ENCODE measurements at regions of chr16 and their contacts with region 1.

Region 1: DNA sequence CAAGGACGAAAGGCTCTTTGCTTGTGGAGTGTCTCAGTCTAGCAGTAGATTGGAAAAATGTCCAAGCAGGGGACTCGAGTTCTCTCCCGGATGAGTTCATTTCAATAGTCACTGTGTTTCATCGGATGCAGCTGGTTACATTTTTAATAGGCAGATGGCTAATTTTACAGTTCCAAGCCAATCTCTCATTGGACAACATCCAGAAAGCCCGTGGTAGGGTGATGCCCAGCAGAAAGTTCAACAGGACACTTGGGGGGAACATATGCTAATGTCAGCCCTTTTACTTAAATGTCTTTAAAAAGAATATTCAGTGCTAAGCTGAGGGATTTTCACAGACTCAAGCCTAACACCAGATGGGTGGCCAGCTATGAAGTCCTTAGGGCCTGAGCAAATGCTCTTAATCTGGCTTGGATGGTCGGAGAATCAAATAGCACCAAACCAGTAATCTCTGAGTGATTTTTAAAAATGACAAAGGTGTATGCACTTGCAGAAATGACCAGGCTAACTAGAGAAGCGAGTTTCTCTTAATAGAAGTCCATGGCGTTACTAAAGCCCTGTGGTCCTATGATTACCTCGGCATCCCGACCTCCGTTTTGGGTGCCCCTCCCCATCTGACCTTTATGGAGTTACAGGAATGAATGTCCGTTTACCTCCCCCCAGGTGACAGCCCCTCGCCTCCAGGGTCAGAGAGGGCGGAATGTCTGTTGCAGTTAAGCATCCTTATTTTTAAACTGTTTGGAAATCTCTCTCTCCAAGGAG is 289.2 kb upstream of the SALL1 start:
- DNase-seq: peak in 2 of 10 donors; percentile 33 to 35
- H3K4me3 ChIP-seq: peak overlapping the region in 52 of 59 donors; percentile 1 to 58 (median 29)
- H3K27ac ChIP-seq: peak overlapping the region; percentile 60 to 95 (median 88)
- H3K27me3 ChIP-seq: peaks cover 0 to 37% (median 0%) of the 10 kb centered on the region in 45 donors
- CTCF ChIP-seq: peak in 1 of 56 donors; percentile 3

Region 2: GRCh38 chr16:51237861-51238378 is 202.4 kb before region 1 on chr16:
- intact Hi-C with region 1: loop called in 1 of 2 experiments (anchors 10 kb)
- DNase-seq: no peak
- H3K4me3 ChIP-seq: peak overlapping the region in 11 of 59 donors; percentile 3 to 31 (median 18)
- H3K27ac ChIP-seq: peak overlapping the region; percentile 4 to 99 (median 94)
- H3K27me3 ChIP-seq: no peaks in the 10 kb centered on the region
- CTCF ChIP-seq: peak in 1 of 56 donors; percentile 16

Region 3: DNA sequence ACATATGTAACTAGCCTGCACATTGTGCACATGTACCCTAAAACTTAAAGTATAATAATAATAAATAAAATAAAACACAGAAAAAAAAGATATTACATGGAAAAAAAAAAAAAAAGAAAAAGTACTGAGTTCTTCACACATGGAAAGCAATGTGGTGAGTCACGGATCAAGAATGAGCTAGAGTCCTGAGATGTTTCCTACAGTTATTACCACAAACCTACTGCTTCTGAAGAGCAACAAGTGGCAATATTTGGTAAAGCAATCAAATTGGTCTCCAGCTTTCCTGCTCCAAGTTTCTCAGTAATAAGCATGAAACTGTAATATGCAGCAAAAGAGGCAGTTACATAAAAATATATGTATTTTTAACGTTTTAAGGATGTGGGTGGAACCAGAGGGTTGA is 66.0 kb before region 1 on chr16:
- intact Hi-C with region 1: no loop called
- DNase-seq: no peak
- H3K4me3 ChIP-seq: no peak overlapping the region
- H3K27ac ChIP-seq: no peak overlapping the region
- H3K27me3 ChIP-seq: peaks cover 0 to 3% (median 0%) of the 10 kb centered on the region in 45 donors
- CTCF ChIP-seq: no peak

Region 4: GRCh38 chr16:51756447-51757123 is 316.3 kb after region 1 on chr16:
- intact Hi-C with region 1: loop called in 1 of 2 experiments (anchors 10 kb)
- DNase-seq: no peak
- H3K4me3 ChIP-seq: peak overlapping the region in 36 of 59 donors; percentile 5 to 51 (median 25)
- H3K27ac ChIP-seq: peak overlapping the region in 2 of 59 donors; percentile 22 to 36
- H3K27me3 ChIP-seq: peaks cover 0 to 31% (median 0%) of the 10 kb centered on the region in 45 donors
- CTCF ChIP-seq: peak in 17 of 56 donors; percentile 7 to 44 (median 27)

Region 5: GRCh38 chr16:51825730-51826129 is 385.4 kb after region 1 on chr16:
- intact Hi-C with region 1: no loop called
- DNase-seq: no peak
- H3K4me3 ChIP-seq: no peak overlapping the region
- H3K27ac ChIP-seq: no peak overlapping the region
- H3K27me3 ChIP-seq: no peaks in the 10 kb centered on the region
- CTCF ChIP-seq: no peak

Measured in dorsolateral prefrontal cortex (tissue), 120 donors.